WTC11 (cell line): ENCODE measurements at regions of chr19 and their contacts with region 1.

Region 1: GRCh38 chr19:17579661-17580244 is 24.3 kb downstream of the COLGALT1 start:
- DNase-seq: peak; percentile 93
- ATAC-seq: peak; percentile 71
- H3K4me3 Mint-ChIP-seq: peak overlapping the region; percentile 60
- H3K27ac Mint-ChIP-seq: peak overlapping the region; percentile 97
- H3K4me1 Mint-ChIP-seq: peaks cover 25% of the 10 kb centered on the region
- H3K27me3 Mint-ChIP-seq: no peaks in the 10 kb centered on the region
- CTCF ChIP-seq: no peak

Region 2: GRCh38 chr19:17511724-17512573 is 67.8 kb before region 1 on chr19:
- CTCF ChIA-PET with region 1: interaction called, 12 read pairs
- POLR2A ChIA-PET with region 1: interaction called, 5 read pairs
- DNase-seq: peak; percentile 87
- ATAC-seq: peak; percentile 73
- H3K4me3 Mint-ChIP-seq: peak overlapping the region; percentile 98
- H3K27ac Mint-ChIP-seq: peak overlapping the region; percentile 95
- H3K4me1 Mint-ChIP-seq: peaks cover 16% of the 10 kb centered on the region
- H3K27me3 Mint-ChIP-seq: no peaks in the 10 kb centered on the region
- CTCF ChIP-seq: no peak

Region 3: GRCh38 chr19:17539238-17540117 is 40.3 kb before region 1 on chr19:
- CTCF ChIA-PET with region 1: interaction called, 11 read pairs
- POLR2A ChIA-PET with region 1: interaction called, 7 read pairs
- DNase-seq: peak; percentile 100
- ATAC-seq: peak; percentile 85
- H3K4me3 Mint-ChIP-seq: peak overlapping the region; percentile 83
- H3K27ac Mint-ChIP-seq: no peak overlapping the region; the same call in 1 of the 2 replicates
- H3K4me1 Mint-ChIP-seq: peaks cover 4% of the 10 kb centered on the region
- H3K27me3 Mint-ChIP-seq: peaks cover 46% of the 10 kb centered on the region
- CTCF ChIP-seq: no peak

Region 4: GRCh38 chr19:17555480-17555928 is 24.2 kb before region 1 on chr19 and contains the start of gene COLGALT1:
- CTCF ChIA-PET with region 1: interaction called, 11 read pairs
- POLR2A ChIA-PET with region 1: no interaction called
- DNase-seq: peak; percentile 99
- ATAC-seq: peak; percentile 96
- H3K4me3 Mint-ChIP-seq: peak within 1 kb of the TSS; percentile 69
- H3K27ac Mint-ChIP-seq: no peak within 1 kb of the TSS
- H3K4me1 Mint-ChIP-seq: peaks cover 17% of the 10 kb centered on the region
- H3K27me3 Mint-ChIP-seq: no peaks in the 10 kb centered on the region; the same call in 1 of the 2 replicates
- CTCF ChIP-seq: no peak
- total RNA-seq, gene COLGALT1: 54.0 to 71.7 TPM (median 67.1 TPM) in 3 replicates